ENCODE measurements at regions of chr9 and their contacts with region 1.

Region 1: GRCh38 chr9:27033823-27034403 is 28.4 kb upstream of the LRRC19 start:
- DNase-seq: peak; percentile 74
- ATAC-seq: peak; percentile 74
- H3K4me3 Mint-ChIP-seq: no peak overlapping the region
- H3K27ac Mint-ChIP-seq: no peak overlapping the region
- H3K4me1 Mint-ChIP-seq: no peaks in the 10 kb centered on the region
- H3K27me3 Mint-ChIP-seq: no peaks in the 10 kb centered on the region
- CTCF ChIP-seq: peak; percentile 80

Region 2: GRCh38 chr9:27019589-27019988 is 14.3 kb before region 1 on chr9:
- CTCF ChIA-PET with region 1: interaction called, 10 read pairs
- POLR2A ChIA-PET with region 1: no interaction called
- intact Hi-C with region 1: no loop called
- DNase-seq: no peak
- ATAC-seq: no peak
- H3K4me3 Mint-ChIP-seq: no peak overlapping the region
- H3K27ac Mint-ChIP-seq: no peak overlapping the region
- H3K4me1 Mint-ChIP-seq: no peaks in the 10 kb centered on the region
- H3K27me3 Mint-ChIP-seq: no peaks in the 10 kb centered on the region
- CTCF ChIP-seq: no peak

Region 3: DNA sequence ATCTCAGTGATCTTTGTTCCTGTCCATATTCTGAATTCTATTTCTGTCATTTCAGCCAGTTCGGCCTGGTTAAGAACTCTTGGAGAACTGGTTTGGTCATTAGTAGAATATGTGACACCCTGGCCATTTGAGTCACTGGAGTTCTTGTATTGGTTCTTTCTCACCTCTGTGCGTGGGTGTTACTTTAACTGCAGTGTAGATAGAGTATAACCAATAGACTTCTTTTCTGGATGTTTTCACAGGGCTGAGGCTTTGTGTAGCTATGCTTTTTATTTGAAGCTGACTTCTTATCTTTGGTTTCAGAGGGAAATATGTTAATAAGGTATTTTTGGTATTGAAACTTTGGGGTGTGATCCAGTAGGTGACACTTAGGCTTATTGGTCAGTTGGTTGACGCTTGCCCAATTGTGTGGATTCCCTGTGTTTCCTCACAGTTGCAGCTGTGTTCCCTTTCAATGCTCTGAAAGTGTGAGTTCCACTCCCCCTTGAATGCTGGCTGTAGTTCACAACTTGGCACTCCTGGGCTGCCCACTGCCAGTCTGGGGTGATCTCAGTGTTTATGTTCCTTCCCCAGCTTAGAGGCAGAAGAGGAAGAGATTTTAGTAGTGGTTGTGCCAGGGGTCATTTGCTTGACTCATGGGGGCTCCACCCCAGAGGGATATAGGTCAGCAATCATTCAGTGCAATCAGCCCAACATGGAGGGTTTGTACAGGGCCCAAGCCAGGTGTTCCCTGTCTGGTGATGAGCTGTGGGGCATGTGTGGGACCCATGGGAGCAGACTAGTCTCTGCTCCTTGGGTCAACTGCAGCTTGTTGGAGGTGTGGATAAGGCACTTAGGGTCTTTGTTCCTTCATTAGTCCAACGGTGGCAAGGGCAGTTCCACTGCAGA is 40.2 kb after region 1 on chr9:
- CTCF ChIA-PET with region 1: no interaction called
- POLR2A ChIA-PET with region 1: no interaction called
- intact Hi-C with region 1: no loop called
- DNase-seq: no peak
- ATAC-seq: no peak
- H3K4me3 Mint-ChIP-seq: no peak overlapping the region
- H3K27ac Mint-ChIP-seq: no peak overlapping the region
- H3K4me1 Mint-ChIP-seq: no peaks in the 10 kb centered on the region
- H3K27me3 Mint-ChIP-seq: no peaks in the 10 kb centered on the region
- CTCF ChIP-seq: no peak

Region 4: GRCh38 chr9:27276193-27277030 is 242.5 kb after region 1 on chr9:
- CTCF ChIA-PET with region 1: interaction called, 9 read pairs
- POLR2A ChIA-PET with region 1: no interaction called
- intact Hi-C with region 1: loop called (anchors 1 kb)
- DNase-seq: no peak
- ATAC-seq: no peak
- H3K4me3 Mint-ChIP-seq: no peak overlapping the region
- H3K27ac Mint-ChIP-seq: no peak overlapping the region
- H3K4me1 Mint-ChIP-seq: peaks cover 2% of the 10 kb centered on the region
- H3K27me3 Mint-ChIP-seq: peaks cover 9% of the 10 kb centered on the region
- CTCF ChIP-seq: peak; percentile 92

Measured in activated CD8-positive, alpha-beta T cell treated with anti-CD3 and anti-CD28 coated beads for 36 hours (primary cell).